IMR-90 (cell line): ENCODE measurements at regions of chr10 and their contacts with region 1.

Region 1: GRCh38 chr10:87659571-87660483 is at the start of gene PAPSS2:
- DNase-seq: peak; percentile 68
- ATAC-seq: peak; percentile 71
- H3K4me3 ChIP-seq: peak within 1 kb of the TSS; percentile 98
- H3K27ac ChIP-seq: peak within 1 kb of the TSS; percentile 85
- H3K4me1 ChIP-seq: peaks cover 14% of the 10 kb centered on the region
- H3K27me3 ChIP-seq: no peaks in the 10 kb centered on the region
- CTCF ChIP-seq: no peak
- POLR2A ChIP-seq: peak; percentile 63
- RAD21 ChIP-seq: no peak
- total RNA-seq, gene PAPSS2: 55.0 and 58.6 TPM in 2 replicates

Region 2: GRCh38 chr10:87547734-87548311 is 112.0 kb before region 1 on chr10:
- CTCF ChIA-PET with region 1: interaction called, 3 read pairs
- POLR2A ChIA-PET with region 1: no interaction called
- dilution Hi-C with region 1: no loop called
- in situ Hi-C with region 1: no loop called
- intact Hi-C with region 1: loop called (anchors 2 kb)
- DNase-seq: peak; percentile 91
- ATAC-seq: peak; percentile 71
- H3K4me3 ChIP-seq: no peak overlapping the region
- H3K27ac ChIP-seq: peak overlapping the region; percentile 82
- H3K4me1 ChIP-seq: peaks cover 28% of the 10 kb centered on the region
- H3K27me3 ChIP-seq: no peaks in the 10 kb centered on the region
- CTCF ChIP-seq: no peak
- POLR2A ChIP-seq: no peak
- RAD21 ChIP-seq: 0 out of 2 replicates have a peak, but pooled peaks have one; percentile 9

Region 3: GRCh38 chr10:87723500-87723899 is 63.7 kb after region 1 on chr10:
- CTCF ChIA-PET with region 1: interaction called, 3 read pairs
- POLR2A ChIA-PET with region 1: no interaction called
- dilution Hi-C with region 1: no loop called
- in situ Hi-C with region 1: no loop called
- intact Hi-C with region 1: loop called (anchors 5 kb)
- DNase-seq: peak; percentile 43
- ATAC-seq: peak; percentile 61
- H3K4me3 ChIP-seq: no peak overlapping the region
- H3K27ac ChIP-seq: no peak overlapping the region
- H3K4me1 ChIP-seq: peaks cover 9% of the 10 kb centered on the region
- H3K27me3 ChIP-seq: no peaks in the 10 kb centered on the region
- CTCF ChIP-seq: no peak
- POLR2A ChIP-seq: no peak
- RAD21 ChIP-seq: no peak

Region 4: GRCh38 chr10:88386821-88387773 is 727.3 kb after region 1 on chr10:
- CTCF ChIA-PET with region 1: no interaction called
- POLR2A ChIA-PET with region 1: no interaction called
- dilution Hi-C with region 1: no loop called
- in situ Hi-C with region 1: no loop called
- intact Hi-C with region 1: loop called (anchors 5 kb)
- DNase-seq: peak; percentile 82
- ATAC-seq: peak; percentile 91
- H3K4me3 ChIP-seq: no peak overlapping the region
- H3K27ac ChIP-seq: no peak overlapping the region; the same call in 1 of the 2 replicates
- H3K4me1 ChIP-seq: peaks cover 2% of the 10 kb centered on the region; the same call in 1 of the 2 replicates
- H3K27me3 ChIP-seq: no peaks in the 10 kb centered on the region
- CTCF ChIP-seq: no peak
- POLR2A ChIP-seq: no peak
- RAD21 ChIP-seq: no peak